ENCODE measurements at regions of chr11 and their contacts with region 1.

Region 1: DNA sequence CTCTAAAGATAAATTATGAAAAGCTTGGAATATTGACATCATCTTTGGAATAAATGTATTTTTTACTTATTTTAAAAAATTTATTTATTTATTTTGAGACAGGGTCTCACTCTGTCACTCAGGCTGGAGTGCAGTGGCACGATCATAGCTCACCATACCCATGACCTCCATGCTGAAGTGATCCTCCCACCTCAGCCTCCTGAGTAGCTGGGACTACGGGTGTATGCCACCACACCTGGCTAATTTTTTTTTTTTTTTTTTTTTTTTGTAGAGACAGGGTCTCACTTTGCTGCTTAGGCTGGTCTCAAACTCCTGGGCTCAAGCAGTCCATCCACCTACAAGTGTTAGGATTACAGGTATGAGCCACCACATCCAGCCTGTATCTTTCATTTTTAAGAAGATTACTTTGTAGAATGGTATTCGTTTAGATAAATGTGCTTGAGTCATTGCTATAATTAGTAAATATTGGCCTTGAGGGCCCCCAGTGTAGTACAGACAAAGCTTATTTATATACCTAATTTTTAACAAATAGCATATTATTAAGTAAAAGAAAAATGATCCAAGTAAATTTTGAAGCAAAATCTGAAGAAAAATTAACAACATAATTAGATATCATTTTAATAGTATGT is 8.5 kb downstream of the SWAP70 start:
- DNase-seq: no peak
- CTCF ChIP-seq: no peak

Region 2: GRCh38 chr11:9315037-9315688 is 357.2 kb before region 1 on chr11:
- CTCF ChIA-PET with region 1: no interaction called
- POLR2A ChIA-PET with region 1: no interaction called
- DNase-seq: no peak
- CTCF ChIP-seq: no peak

Region 3: GRCh38 chr11:9688716-9689511 is 16.5 kb after region 1 on chr11:
- CTCF ChIA-PET with region 1: interaction called, 10 read pairs
- POLR2A ChIA-PET with region 1: interaction called, 4 read pairs
- DNase-seq: peak; percentile 45
- CTCF ChIP-seq: no peak

Measured in GM10248 (cell line).